ENCODE measurements at regions of chr22 and their contacts with region 1.

Region 1: GRCh38 chr22:23849009-23850006 is 8.4 kb upstream of the SLC2A11 start:
- DNase-seq: peak; percentile 95
- ATAC-seq: peak; percentile 78
- H3K4me3 Mint-ChIP-seq: peak overlapping the region; percentile 70
- H3K27ac Mint-ChIP-seq: no peak overlapping the region
- H3K4me1 Mint-ChIP-seq: peaks cover 69% of the 10 kb centered on the region
- H3K27me3 Mint-ChIP-seq: no peaks in the 10 kb centered on the region
- CTCF ChIP-seq: peak; percentile 60

Region 2: GRCh38 chr22:23539135-23539838 is 310.0 kb before region 1 on chr22:
- CTCF ChIA-PET with region 1: interaction called, 7 read pairs
- POLR2A ChIA-PET with region 1: no interaction called
- intact Hi-C with region 1: loop called (anchors 1 kb)
- DNase-seq: peak; percentile 50
- ATAC-seq: peak; percentile 100
- H3K4me3 Mint-ChIP-seq: peak overlapping the region; percentile 30
- H3K27ac Mint-ChIP-seq: no peak overlapping the region
- H3K4me1 Mint-ChIP-seq: peaks cover 24% of the 10 kb centered on the region
- H3K27me3 Mint-ChIP-seq: no peaks in the 10 kb centered on the region
- CTCF ChIP-seq: peak; percentile 40

Region 3: GRCh38 chr22:23696326-23696851 is 152.9 kb before region 1 on chr22:
- CTCF ChIA-PET with region 1: interaction called, 10 read pairs
- POLR2A ChIA-PET with region 1: no interaction called
- intact Hi-C with region 1: no loop called
- DNase-seq: peak; percentile 52
- ATAC-seq: peak; percentile 99
- H3K4me3 Mint-ChIP-seq: peak overlapping the region; percentile 75
- H3K27ac Mint-ChIP-seq: peak overlapping the region; percentile 95
- H3K4me1 Mint-ChIP-seq: peaks cover 27% of the 10 kb centered on the region
- H3K27me3 Mint-ChIP-seq: no peaks in the 10 kb centered on the region
- CTCF ChIP-seq: no peak

Region 4: DNA sequence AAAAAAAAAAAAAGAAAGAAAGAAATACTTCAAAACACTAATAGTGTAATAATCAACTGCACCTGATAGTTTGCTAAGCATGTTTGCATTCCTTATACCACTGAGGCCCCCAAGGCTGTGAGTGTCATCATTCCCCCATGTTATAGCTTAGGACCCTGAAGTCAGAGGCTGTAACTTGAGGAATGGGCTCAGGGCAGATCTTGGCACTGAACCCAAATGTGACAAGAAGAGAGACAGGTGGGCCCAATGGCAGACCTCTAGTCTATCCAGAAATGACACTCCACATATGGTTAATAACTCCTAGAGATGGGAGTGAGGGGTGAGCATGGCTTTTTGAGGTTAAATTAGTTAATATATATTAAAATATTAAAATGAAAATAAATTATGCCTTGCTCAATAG is 111.6 kb before region 1 on chr22:
- CTCF ChIA-PET with region 1: interaction called, 18 read pairs
- POLR2A ChIA-PET with region 1: interaction called, 3 read pairs
- intact Hi-C with region 1: no loop called
- DNase-seq: no peak
- ATAC-seq: no peak
- H3K4me3 Mint-ChIP-seq: no peak overlapping the region
- H3K27ac Mint-ChIP-seq: no peak overlapping the region
- H3K4me1 Mint-ChIP-seq: no peaks in the 10 kb centered on the region
- H3K27me3 Mint-ChIP-seq: no peaks in the 10 kb centered on the region
- CTCF ChIP-seq: no peak

Region 5: GRCh38 chr22:23893943-23894709 is 44.8 kb after region 1 on chr22 and contains the start of gene MIF:
- CTCF ChIA-PET with region 1: no interaction called
- POLR2A ChIA-PET with region 1: interaction called, 11 read pairs
- intact Hi-C with region 1: no loop called
- DNase-seq: peak; percentile 100
- ATAC-seq: peak; percentile 88
- H3K4me3 Mint-ChIP-seq: peak within 1 kb of the TSS; percentile 96
- H3K27ac Mint-ChIP-seq: peak within 1 kb of the TSS; percentile 96
- H3K4me1 Mint-ChIP-seq: peaks cover 25% of the 10 kb centered on the region
- H3K27me3 Mint-ChIP-seq: no peaks in the 10 kb centered on the region
- CTCF ChIP-seq: peak; percentile 44
- total RNA-seq, gene MIF: 308 and 349 TPM in 2 replicates

Region 6: GRCh38 chr22:23997092-23997491 is 147.8 kb after region 1 on chr22:
- CTCF ChIA-PET with region 1: no interaction called
- POLR2A ChIA-PET with region 1: no interaction called
- intact Hi-C with region 1: no loop called
- DNase-seq: no peak
- ATAC-seq: no peak
- H3K4me3 Mint-ChIP-seq: no peak overlapping the region
- H3K27ac Mint-ChIP-seq: no peak overlapping the region
- H3K4me1 Mint-ChIP-seq: peaks cover 4% of the 10 kb centered on the region
- H3K27me3 Mint-ChIP-seq: no peaks in the 10 kb centered on the region
- CTCF ChIP-seq: no peak

Region 7: GRCh38 chr22:24768537-24769374 is 919.4 kb after region 1 on chr22:
- CTCF ChIA-PET with region 1: no interaction called
- POLR2A ChIA-PET with region 1: interaction called, 12 read pairs
- intact Hi-C with region 1: no loop called
- DNase-seq: no peak
- ATAC-seq: peak; percentile 49
- H3K4me3 Mint-ChIP-seq: no peak overlapping the region
- H3K27ac Mint-ChIP-seq: no peak overlapping the region
- H3K4me1 Mint-ChIP-seq: no peaks in the 10 kb centered on the region
- H3K27me3 Mint-ChIP-seq: peaks cover 3% of the 10 kb centered on the region
- CTCF ChIP-seq: no peak